H1 (cell line): ENCODE measurements at regions of chr9 and their contacts with region 1.

Region 1: GRCh38 chr9:93003552-93004407 is 54.7 kb upstream of the SUSD3 start:
- DNase-seq: peak in 1 of 2 experiments; percentile 82
- H3K4me3 ChIP-seq: no peak overlapping the region
- H3K27ac ChIP-seq: no peak overlapping the region
- H3K4me1 ChIP-seq: 0 out of 7 replicates have a peak, but pooled peaks cover 0 to 3% (median under 1%) of the 10 kb centered on the region in 4 experiments
- H3K27me3 ChIP-seq: no peaks in the 10 kb centered on the region
- CTCF ChIP-seq: peak; percentile 57 to 95 (median 78)
- EP300 ChIP-seq: no peak
- POLR2A ChIP-seq: no peak
- RAD21 ChIP-seq: peak; percentile 76 to 87

Region 2: DNA sequence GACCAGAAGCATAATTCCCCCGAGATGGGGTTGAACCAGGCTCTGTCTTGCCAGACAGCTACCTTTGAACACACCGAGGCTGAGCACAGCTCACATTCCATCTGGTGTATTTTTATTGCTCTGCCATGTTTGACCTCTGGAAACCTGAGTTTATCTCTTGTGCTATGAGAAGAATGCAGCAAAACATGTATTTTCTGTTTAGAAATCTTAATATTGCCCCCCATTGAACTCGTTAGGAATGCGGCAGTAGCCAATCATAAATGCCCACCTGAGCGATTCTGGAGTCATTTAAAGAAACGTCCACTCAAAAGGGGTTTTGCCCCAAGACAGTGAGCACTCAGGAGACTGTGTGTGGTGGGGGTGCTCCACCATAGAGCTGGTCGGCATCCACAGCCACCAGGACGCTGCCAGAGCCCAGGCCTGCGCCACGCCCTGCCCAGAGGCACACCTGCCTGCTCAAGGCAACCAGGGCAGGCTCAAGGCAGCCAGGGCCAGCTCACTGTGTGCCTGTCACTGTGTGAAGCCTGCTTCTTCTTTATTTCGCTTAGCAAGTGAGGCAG is 29.5 kb before region 1 on chr9:
- CTCF ChIA-PET with region 1: interaction called, 15 read pairs
- POLR2A ChIA-PET with region 1: no interaction called
- DNase-seq: peak in 1 of 2 experiments; percentile 33
- H3K4me3 ChIP-seq: no peak overlapping the region
- H3K27ac ChIP-seq: no peak overlapping the region
- H3K4me1 ChIP-seq: peaks cover 16 to 34% (median 17%) of the 10 kb centered on the region in 4 experiments
- H3K27me3 ChIP-seq: no peaks in the 10 kb centered on the region; a peak in 1 of 7 replicates
- CTCF ChIP-seq: no peak
- EP300 ChIP-seq: no peak
- POLR2A ChIP-seq: no peak
- RAD21 ChIP-seq: no peak

Region 3: GRCh38 chr9:92992549-92992948 is 11.2 kb before region 1 on chr9:
- CTCF ChIA-PET with region 1: interaction called, 39 read pairs
- POLR2A ChIA-PET with region 1: interaction called, 5 read pairs
- DNase-seq: peak in 1 of 2 experiments; percentile 38
- H3K4me3 ChIP-seq: peak overlapping the region in 1 of 4 experiments; percentile 5; a peak in 1 of 8 replicates
- H3K27ac ChIP-seq: 0 out of 2 replicates have a peak overlapping the region, but pooled peaks have one; percentile 32
- H3K4me1 ChIP-seq: peaks cover 5 to 17% (median 11%) of the 10 kb centered on the region in 4 experiments; a peak in 6 of 7 replicates
- H3K27me3 ChIP-seq: no peaks in the 10 kb centered on the region
- CTCF ChIP-seq: no peak
- EP300 ChIP-seq: peak; percentile 5 to 17; a peak in 2 of 3 replicates
- POLR2A ChIP-seq: peak in 1 of 2 experiments; percentile 35; a peak in 1 of 3 replicates
- RAD21 ChIP-seq: peak in 1 of 2 experiments; percentile 8; a peak in 1 of 4 replicates

Region 4: DNA sequence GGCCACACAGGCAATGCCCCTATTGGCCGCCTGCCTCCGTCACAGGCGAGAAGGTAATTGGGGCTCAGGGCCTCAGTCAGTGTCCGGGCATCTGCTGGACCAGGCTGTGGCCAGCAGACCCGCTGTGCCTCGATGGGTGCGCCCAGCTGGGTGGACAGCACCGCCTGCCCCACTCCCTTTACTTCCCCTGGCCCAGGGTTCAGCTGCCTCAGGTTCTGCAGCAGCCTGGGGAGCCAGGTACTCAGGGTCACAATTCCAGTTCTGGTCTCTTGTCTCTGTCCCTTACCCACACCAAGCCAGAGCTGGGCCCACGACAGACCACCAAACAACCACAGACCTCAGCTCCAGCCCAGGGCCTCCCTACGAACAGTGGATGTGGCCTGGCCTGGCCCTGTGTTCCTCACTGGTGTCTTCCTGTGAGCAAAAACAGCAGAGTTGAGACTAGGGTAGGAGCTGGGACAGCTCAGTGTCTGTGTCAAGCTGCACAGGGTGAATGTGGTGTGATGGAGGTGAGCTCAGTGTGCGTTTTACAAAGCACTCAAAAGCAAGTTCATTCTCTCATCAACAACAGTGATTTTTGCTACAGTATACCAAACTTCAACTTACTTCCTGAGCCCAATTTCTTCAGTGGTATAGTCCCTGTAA is 21.3 kb after region 1 on chr9:
- CTCF ChIA-PET with region 1: interaction called, 23 read pairs
- POLR2A ChIA-PET with region 1: interaction called, 3 read pairs
- DNase-seq: no peak
- H3K4me3 ChIP-seq: no peak overlapping the region
- H3K27ac ChIP-seq: no peak overlapping the region
- H3K4me1 ChIP-seq: no peaks in the 10 kb centered on the region; a peak in 1 of 7 replicates
- H3K27me3 ChIP-seq: no peaks in the 10 kb centered on the region; a peak in 1 of 7 replicates
- CTCF ChIP-seq: no peak
- EP300 ChIP-seq: no peak
- POLR2A ChIP-seq: no peak
- RAD21 ChIP-seq: no peak

Region 5: DNA sequence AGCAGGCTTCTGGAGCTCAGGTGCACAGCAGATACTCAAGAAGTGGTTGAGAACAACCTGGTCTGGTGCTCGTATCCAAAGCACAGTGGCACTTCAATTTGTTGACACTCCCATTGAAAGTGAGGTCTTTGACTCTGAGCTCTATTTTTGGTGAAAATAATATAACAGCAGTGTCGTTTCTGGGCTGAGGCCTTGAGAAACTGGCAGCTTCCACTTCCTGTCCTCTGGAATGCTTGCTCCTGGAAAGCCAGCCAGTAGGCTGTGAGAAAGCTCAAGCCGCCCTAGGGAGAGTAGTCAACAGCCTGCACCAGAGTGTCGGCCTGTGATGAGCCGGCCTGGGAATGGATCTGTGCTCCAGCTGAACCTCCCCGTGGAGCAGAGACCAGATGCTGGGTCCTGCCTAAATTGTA is 47.9 kb after region 1 on chr9:
- CTCF ChIA-PET with region 1: interaction called, 25 read pairs
- POLR2A ChIA-PET with region 1: no interaction called
- DNase-seq: no peak
- H3K4me3 ChIP-seq: no peak overlapping the region
- H3K27ac ChIP-seq: no peak overlapping the region
- H3K4me1 ChIP-seq: peaks cover 7 to 13% (median 10%) of the 10 kb centered on the region in 4 experiments
- H3K27me3 ChIP-seq: no peaks in the 10 kb centered on the region; a peak in 2 of 7 replicates
- CTCF ChIP-seq: no peak
- EP300 ChIP-seq: no peak
- POLR2A ChIP-seq: no peak
- RAD21 ChIP-seq: no peak

Region 6: GRCh38 chr9:93111371-93112115 is 107.8 kb after region 1 on chr9:
- CTCF ChIA-PET with region 1: interaction called, 19 read pairs
- POLR2A ChIA-PET with region 1: no interaction called
- DNase-seq: no peak
- H3K4me3 ChIP-seq: no peak overlapping the region
- H3K27ac ChIP-seq: no peak overlapping the region
- H3K4me1 ChIP-seq: peaks cover 0 to 14% (median 9%) of the 10 kb centered on the region in 4 experiments; a peak in 6 of 7 replicates
- H3K27me3 ChIP-seq: no peaks in the 10 kb centered on the region
- CTCF ChIP-seq: no peak
- EP300 ChIP-seq: no peak
- POLR2A ChIP-seq: no peak
- RAD21 ChIP-seq: no peak